Heart right ventricle (tissue), 16 donors: ENCODE measurements at regions of chr1 and their contacts with region 1.

Region 1: DNA sequence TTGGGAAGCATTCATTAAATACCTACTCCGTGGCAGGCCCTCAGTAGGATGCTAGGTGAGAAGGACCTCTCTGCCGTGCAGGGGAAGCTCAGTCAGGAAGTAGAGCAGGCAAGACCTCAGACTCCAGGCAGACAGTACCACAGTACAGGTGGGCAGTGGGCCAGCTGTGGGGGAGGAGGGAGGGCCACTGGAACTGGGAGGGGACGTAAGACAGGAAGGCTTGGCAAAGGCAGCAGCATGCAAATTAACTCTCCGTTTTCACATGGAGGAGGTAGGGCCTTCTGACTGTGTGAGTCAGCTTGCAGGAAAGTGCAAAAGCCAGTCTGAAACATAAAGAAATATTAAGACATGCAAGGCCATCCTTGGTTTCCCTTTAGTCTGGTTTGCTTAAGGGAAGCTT is 157.7 kb downstream of the TRIM33 start:
- DNase-seq: peak; percentile 65 to 76
- ATAC-seq: peak; percentile 82 to 93 (median 86)
- H3K4me3 ChIP-seq: no peak overlapping the region
- H3K27ac ChIP-seq: no peak overlapping the region
- H3K4me1 ChIP-seq: peaks cover 0 to 19% (median 10%) of the 10 kb centered on the region in 9 donors
- H3K27me3 ChIP-seq: no peaks in the 10 kb centered on the region
- CTCF ChIP-seq: no peak

Region 2: GRCh38 chr1:114386129-114387009 is 33.1 kb after region 1 on chr1:
- intact Hi-C with region 1: no loop called
- DNase-seq: no peak
- ATAC-seq: peak in 3 of 8 donors; percentile 39 to 53 (median 42)
- H3K4me3 ChIP-seq: no peak overlapping the region
- H3K27ac ChIP-seq: no peak overlapping the region
- H3K4me1 ChIP-seq: peaks cover 0 to 19% (median 0%) of the 10 kb centered on the region in 9 donors
- H3K27me3 ChIP-seq: no peaks in the 10 kb centered on the region
- CTCF ChIP-seq: no peak

Region 3: GRCh38 chr1:114418247-114418646 is 65.0 kb after region 1 on chr1:
- intact Hi-C with region 1: loop called in 3 of 10 experiments (anchors 5 to 10 kb)
- DNase-seq: no peak
- ATAC-seq: no peak
- H3K4me3 ChIP-seq: no peak overlapping the region
- H3K27ac ChIP-seq: no peak overlapping the region
- H3K4me1 ChIP-seq: no peaks in the 10 kb centered on the region
- H3K27me3 ChIP-seq: no peaks in the 10 kb centered on the region
- CTCF ChIP-seq: no peak